ENCODE measurements at regions of chr3 and their contacts with region 1.

Region 1: GRCh38 chr3:128051837-128052594 is at the start of gene SEC61A1:
- DNase-seq: peak; percentile 72
- ATAC-seq: peak; percentile 95
- H3K4me3 ChIP-seq: peak within 1 kb of the TSS; percentile 100
- H3K27ac ChIP-seq: peak within 1 kb of the TSS; percentile 79
- H3K4me1 ChIP-seq: peaks cover 15% of the 10 kb centered on the region; the same call in 1 of the 2 replicates
- H3K27me3 ChIP-seq: no peaks in the 10 kb centered on the region
- CTCF ChIP-seq: no peak
- EP300 ChIP-seq: 0 out of 4 replicates have a peak, but pooled peaks of 1 of the 2 experiments have one; percentile 9
- POLR2A ChIP-seq: peak; percentile 97
- RAD21 ChIP-seq: no peak
- polyA plus RNA-seq, gene SEC61A1: 5.2 to 5.9 TPM

Region 2: DNA sequence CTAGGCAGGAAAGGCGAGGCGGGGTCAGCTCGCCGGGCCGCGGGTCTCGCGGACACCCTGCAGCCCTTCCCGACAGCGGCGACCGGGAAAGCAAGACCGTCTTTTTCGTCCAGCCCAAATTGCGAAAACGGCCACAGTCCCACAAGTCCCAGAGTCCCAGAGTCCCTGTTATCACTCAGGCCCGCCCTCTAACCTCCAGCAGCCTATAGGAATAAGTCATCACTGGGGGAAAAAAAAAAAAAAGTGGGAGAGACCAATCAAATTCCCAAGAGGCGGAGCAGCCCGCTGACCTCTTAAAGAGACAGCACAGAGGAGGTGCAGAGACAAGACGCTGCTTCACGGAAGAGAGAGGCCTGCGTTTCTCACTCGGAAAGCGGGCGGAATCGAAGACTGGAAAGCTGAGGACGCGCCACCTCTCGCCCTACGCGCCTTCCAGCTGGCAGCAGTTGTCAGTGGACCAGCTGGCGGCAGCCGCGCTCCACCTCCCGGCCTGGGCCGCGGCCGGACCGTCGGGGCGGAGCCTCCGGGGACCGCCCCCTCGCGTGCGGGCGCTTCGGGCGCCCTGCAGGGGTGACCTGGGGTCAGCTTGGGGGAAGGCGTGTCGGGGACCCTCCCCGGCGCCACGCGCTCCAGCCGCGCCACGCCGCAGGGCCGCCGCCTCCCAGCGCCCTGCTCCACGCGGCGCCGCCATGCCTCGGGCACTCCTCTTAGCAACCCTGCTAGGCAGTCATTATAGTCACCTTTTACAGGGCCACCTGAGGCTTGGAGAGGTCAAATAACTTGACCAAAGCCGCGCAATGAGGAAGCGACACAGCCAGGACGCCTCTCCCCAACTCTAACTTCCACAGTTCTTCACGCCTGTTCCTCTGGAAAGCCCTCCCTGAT is 461.2 kb before region 1 on chr3 and contains the start of gene TPRA1:
- CTCF ChIA-PET with region 1: no interaction called
- POLR2A ChIA-PET with region 1: no interaction called
- RAD21 ChIA-PET with region 1: no interaction called
- SMC1A ChIA-PET with region 1: no interaction called
- in situ Hi-C with region 1: no loop called
- intact Hi-C with region 1: loop called (anchors 5 kb)
- DNase-seq: peak; percentile 90
- ATAC-seq: peak; percentile 84
- H3K4me3 ChIP-seq: peak within 1 kb of the TSS; percentile 99
- H3K27ac ChIP-seq: peak within 1 kb of the TSS; percentile 94
- H3K4me1 ChIP-seq: peaks cover 22% of the 10 kb centered on the region
- H3K27me3 ChIP-seq: no peaks in the 10 kb centered on the region
- CTCF ChIP-seq: peak; percentile 26 to 72 (median 42); a peak in 5 of 6 replicates
- EP300 ChIP-seq: no peak
- POLR2A ChIP-seq: peak; percentile 58; the same call in 1 of the 2 replicates
- RAD21 ChIP-seq: peak; percentile 33
- polyA plus RNA-seq, gene TPRA1: 1.8 to 3.6 TPM

Region 3: GRCh38 chr3:127735767-127736704 is 316.0 kb before region 1 on chr3:
- CTCF ChIA-PET with region 1: no interaction called
- POLR2A ChIA-PET with region 1: no interaction called
- RAD21 ChIA-PET with region 1: no interaction called
- SMC1A ChIA-PET with region 1: no interaction called
- in situ Hi-C with region 1: no loop called
- intact Hi-C with region 1: loop called (anchors 10 kb)
- DNase-seq: peak; percentile 85
- ATAC-seq: peak; percentile 85
- H3K4me3 ChIP-seq: peak overlapping the region; percentile 77
- H3K27ac ChIP-seq: peak overlapping the region; percentile 97
- H3K4me1 ChIP-seq: peaks cover 31% of the 10 kb centered on the region
- H3K27me3 ChIP-seq: no peaks in the 10 kb centered on the region
- CTCF ChIP-seq: no peak
- EP300 ChIP-seq: peak in 1 of 2 experiments; percentile 71
- POLR2A ChIP-seq: no peak
- RAD21 ChIP-seq: no peak

Region 4: DNA sequence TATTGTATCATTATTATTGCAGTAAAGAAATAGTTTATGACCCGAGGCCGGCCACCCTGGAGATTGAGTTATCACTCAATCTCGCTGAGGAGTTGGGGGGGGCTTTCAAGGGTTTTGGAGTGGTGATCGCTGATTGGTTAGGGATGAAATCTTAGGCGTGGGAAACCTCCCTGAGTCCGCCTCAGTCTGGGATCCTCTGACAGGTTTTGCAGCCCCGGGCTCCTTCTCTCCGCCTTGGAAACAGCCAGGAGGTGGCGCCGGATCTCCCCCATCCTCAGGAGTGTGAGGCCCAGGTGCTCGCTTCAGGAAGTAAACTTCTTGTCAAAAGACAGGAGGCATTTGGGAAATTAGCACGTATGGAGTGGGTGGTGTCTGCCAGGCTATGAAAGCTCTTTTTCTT is 40.9 kb before region 1 on chr3:
- CTCF ChIA-PET with region 1: no interaction called
- POLR2A ChIA-PET with region 1: interaction called, 10 read pairs
- RAD21 ChIA-PET with region 1: no interaction called
- SMC1A ChIA-PET with region 1: no interaction called
- in situ Hi-C with region 1: no loop called
- intact Hi-C with region 1: no loop called
- DNase-seq: no peak
- ATAC-seq: peak; percentile 41; the same call in 2 of the 3 replicates
- H3K4me3 ChIP-seq: no peak overlapping the region
- H3K27ac ChIP-seq: no peak overlapping the region
- H3K4me1 ChIP-seq: no peaks in the 10 kb centered on the region
- H3K27me3 ChIP-seq: no peaks in the 10 kb centered on the region
- CTCF ChIP-seq: peak; percentile 28 to 40 (median 34); a peak in 5 of 6 replicates
- EP300 ChIP-seq: no peak
- POLR2A ChIP-seq: no peak
- RAD21 ChIP-seq: peak; percentile 27; the same call in 1 of the 2 replicates

Region 5: DNA sequence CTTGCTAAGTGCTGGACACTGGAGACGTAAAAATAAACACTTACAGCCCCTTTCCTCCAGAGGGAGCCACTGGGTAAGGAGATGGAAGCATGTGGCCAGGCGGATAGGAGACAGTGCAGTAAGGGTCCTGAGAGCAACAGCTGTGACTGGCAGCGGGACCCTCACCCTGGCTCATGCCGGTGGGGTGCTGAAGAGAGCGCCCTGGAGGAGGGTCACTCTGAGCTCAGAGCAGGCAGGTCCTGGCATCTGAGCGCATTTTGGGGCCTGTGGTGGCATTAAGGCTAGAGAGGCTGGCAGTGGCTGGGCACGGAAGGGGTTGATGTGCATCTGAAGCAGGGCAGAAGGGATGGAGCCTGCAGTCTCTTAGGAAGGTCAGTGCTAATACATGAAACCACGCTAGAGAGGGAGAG is 16.2 kb after region 1 on chr3:
- CTCF ChIA-PET with region 1: interaction called, 37 read pairs
- POLR2A ChIA-PET with region 1: interaction called, 18 read pairs
- RAD21 ChIA-PET with region 1: no interaction called
- SMC1A ChIA-PET with region 1: interaction called, 4 read pairs
- in situ Hi-C with region 1: no loop called
- intact Hi-C with region 1: no loop called
- DNase-seq: no peak
- ATAC-seq: peak; percentile 68
- H3K4me3 ChIP-seq: no peak overlapping the region
- H3K27ac ChIP-seq: no peak overlapping the region
- H3K4me1 ChIP-seq: no peaks in the 10 kb centered on the region
- H3K27me3 ChIP-seq: no peaks in the 10 kb centered on the region
- CTCF ChIP-seq: peak; percentile 52 to 70 (median 52); a peak in 5 of 6 replicates
- EP300 ChIP-seq: no peak
- POLR2A ChIP-seq: peak; percentile 60; the same call in 1 of the 2 replicates
- RAD21 ChIP-seq: no peak

Measured in GM12878 (cell line).